ENCODE measurements at regions of chr6 and their contacts with region 1.

Region 1: DNA sequence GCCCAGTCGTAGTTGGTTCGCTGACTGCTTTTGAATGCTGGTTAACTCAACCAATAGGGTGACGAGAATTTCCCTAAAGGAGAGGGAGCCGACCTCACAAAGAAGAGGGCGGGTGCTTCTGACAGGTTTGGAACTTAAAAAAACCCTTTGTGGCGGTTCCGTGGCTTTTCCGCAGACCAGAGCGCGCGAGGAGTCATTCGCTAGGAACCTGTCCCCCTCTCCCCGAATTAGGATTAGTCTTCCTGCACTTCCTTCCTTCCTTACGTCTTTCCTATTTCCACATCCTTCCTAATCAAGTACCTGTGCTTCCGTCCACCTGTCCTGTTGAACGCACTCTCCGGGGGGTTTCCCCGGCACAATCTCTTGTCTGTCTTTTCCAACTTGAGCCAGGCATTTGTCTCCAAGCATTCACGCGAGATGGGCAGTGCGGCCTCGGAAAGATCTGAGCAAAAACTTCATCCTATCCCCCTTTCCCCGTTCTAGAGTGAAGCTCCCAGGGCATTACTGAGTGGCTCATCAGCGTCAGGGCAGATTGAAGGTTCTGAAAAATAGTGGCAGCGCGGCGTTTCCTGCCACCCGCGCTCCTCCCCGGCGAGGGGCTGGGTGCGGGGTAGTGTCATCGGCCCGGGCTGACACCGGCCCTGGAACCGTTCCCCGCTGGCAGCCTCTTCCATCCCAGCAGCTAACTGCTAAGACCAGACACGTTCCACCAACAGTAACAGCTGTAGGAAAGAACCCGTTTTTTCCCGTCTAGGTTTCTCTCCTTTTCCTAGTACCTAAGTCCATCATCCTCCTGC is 1.5 kb upstream of the STXBP5 start:
- DNase-seq: peak; percentile 94
- H3K4me3 ChIP-seq: peak overlapping the region; percentile 54 to 91 (median 86)
- H3K27ac ChIP-seq: peak overlapping the region; percentile 93 to 98 (median 96)
- H3K4me1 ChIP-seq: peaks cover 0 to 26% (median 13%) of the 10 kb centered on the region in 4 donors
- H3K27me3 ChIP-seq: no peaks in the 10 kb centered on the region
- CTCF ChIP-seq: no peak
- EP300 ChIP-seq: no peak
- POLR2A ChIP-seq: peak; percentile 54 to 81

Region 2: DNA sequence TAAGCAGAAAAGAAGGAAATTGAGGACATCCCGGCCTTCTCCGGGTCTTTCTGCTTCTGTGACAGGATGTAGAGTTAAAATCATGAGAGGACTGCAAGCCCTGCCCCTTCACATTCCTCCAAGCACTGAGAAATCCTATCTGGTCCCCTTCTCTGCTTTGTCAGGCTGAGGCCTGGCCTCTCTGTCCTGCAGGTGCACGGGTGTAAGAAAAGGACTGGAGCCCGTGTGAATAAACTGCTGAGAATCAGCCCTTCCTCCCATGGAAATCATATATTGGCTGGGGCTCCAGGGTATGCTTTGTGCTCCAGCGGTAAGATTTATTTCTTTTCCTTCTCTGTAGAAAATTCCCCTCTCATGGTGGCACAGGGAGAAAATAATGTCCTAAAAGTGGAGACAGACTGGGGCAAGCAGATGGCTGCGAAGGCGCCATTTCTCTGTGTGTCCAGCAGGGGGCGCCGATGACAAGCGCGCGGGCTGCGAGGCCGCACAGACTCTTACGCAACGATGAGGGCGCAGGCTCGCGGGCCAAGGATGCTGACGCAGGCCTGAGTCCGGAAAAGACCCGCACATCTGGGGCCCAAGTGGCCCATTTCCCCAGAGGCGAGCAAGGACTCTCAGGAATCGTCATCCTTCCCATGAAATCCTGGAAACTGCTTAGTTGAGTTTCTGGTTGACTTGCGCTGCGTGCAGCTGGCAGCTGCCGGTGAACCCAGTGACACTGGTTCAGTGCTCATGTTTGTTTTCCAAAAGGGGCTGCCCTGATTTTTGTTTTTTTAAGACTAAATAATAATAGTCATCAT is 345.3 kb before region 1 on chr6:
- intact Hi-C with region 1: loop called (anchors 5 kb)
- DNase-seq: peak; percentile 95
- H3K4me3 ChIP-seq: peak overlapping the region; percentile 6 to 38 (median 35)
- H3K27ac ChIP-seq: peak overlapping the region; percentile 2 to 67 (median 62)
- H3K4me1 ChIP-seq: peaks cover 0 to 6% (median 3%) of the 10 kb centered on the region in 4 donors
- H3K27me3 ChIP-seq: no peaks in the 10 kb centered on the region
- CTCF ChIP-seq: peak; percentile 89 to 98 (median 95)
- EP300 ChIP-seq: peak in 2 of 4 donors; percentile 6 to 65
- POLR2A ChIP-seq: no peak

Region 3: GRCh38 chr6:146913842-146914488 is 288.7 kb before region 1 on chr6:
- intact Hi-C with region 1: loop called (anchors 10 kb)
- DNase-seq: peak; percentile 82
- H3K4me3 ChIP-seq: peak overlapping the region in 3 of 4 donors; percentile 20 to 39 (median 33)
- H3K27ac ChIP-seq: peak overlapping the region; percentile 74 to 89 (median 82)
- H3K4me1 ChIP-seq: peaks cover 0 to 37% (median 29%) of the 10 kb centered on the region in 4 donors
- H3K27me3 ChIP-seq: no peaks in the 10 kb centered on the region
- CTCF ChIP-seq: no peak
- EP300 ChIP-seq: peak in 1 of 4 donors; percentile 62
- POLR2A ChIP-seq: no peak

Region 4: DNA sequence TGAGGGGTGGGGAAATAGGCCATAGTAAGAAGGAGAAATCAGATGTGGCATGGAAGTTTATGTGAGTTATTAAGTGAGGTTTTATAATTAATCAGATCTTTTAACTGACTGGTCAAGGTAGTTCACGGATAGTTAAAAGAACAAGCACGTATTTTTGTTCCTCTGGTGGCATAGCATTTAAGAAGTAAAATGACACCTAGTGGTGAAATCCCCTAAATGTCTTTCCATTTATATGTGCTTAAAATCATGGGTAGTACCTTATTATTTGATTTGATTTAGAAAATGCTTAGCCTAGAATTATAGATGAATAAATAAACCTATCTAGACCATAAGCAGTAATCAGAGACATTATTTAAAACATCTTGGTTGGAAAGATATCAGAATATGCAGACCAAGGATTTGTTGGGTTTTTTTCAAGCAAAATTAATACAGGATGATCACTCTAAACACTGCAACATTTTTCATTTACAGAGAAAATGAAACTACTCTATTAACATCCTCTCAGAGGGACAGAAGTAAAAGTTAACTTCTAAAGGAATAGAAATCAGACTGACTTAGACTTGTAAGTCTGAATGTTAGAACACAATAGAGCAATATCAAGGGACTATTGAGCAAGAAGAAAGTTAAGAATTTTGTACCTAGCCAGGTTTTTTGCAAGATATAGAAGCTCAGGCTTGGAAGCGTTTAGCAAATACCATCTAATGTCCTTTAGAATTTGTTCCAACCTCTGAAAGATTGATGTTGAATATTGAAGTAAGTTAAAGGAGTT is 82.6 kb after region 1 on chr6:
- intact Hi-C with region 1: loop called (anchors 5 kb)
- DNase-seq: no peak
- H3K4me3 ChIP-seq: no peak overlapping the region
- H3K27ac ChIP-seq: peak overlapping the region in 2 of 4 donors; percentile 24 to 57
- H3K4me1 ChIP-seq: peaks cover 0 to 45% (median 34%) of the 10 kb centered on the region in 4 donors
- H3K27me3 ChIP-seq: no peaks in the 10 kb centered on the region
- CTCF ChIP-seq: peak in 3 of 4 experiments; percentile 28 to 43 (median 39)
- EP300 ChIP-seq: no peak
- POLR2A ChIP-seq: no peak

Region 5: GRCh38 chr6:148016013-148016412 is 813.3 kb after region 1 on chr6:
- intact Hi-C with region 1: no loop called
- DNase-seq: no peak
- H3K4me3 ChIP-seq: no peak overlapping the region
- H3K27ac ChIP-seq: no peak overlapping the region
- H3K4me1 ChIP-seq: no peaks in the 10 kb centered on the region
- H3K27me3 ChIP-seq: no peaks in the 10 kb centered on the region
- CTCF ChIP-seq: no peak
- EP300 ChIP-seq: no peak
- POLR2A ChIP-seq: no peak